Activated CD4-positive, alpha-beta memory T cell treated with anti-CD3 and anti-CD28 coated beads for 36 hours (primary cell): ENCODE measurements at regions of chr14 and their contacts with region 1.

Region 1: DNA sequence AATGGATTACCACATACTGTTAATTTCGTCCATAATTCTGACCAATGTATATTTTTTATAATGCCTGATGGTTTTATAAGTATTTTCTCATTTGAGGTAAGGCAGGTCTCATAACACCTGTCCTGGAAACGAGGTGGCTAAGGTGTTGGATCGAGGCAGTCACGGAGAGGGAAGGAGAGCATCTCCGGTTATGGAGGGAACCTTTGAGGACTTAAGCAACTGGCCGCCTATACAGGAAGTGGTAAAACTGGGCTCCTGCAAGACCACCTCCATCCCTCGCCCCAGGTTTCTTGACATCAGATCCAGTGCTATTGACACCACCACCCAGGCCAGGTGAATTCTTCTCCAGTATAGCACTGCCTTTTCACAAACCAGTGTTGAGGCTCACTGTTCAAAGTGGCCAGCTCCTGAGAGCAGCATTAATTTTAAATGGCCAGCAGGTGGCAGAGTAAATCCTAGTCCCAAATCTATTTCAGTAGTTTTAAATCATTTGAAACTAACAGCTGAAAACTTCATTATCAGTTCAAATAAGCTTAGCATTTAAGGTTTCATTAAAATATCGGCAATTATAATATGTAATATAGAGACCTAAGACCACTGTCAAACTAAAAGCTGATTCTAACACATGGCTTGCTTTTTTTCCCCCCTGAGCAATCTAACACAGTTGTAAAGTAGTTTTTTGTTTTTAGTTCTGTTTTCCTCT is 100.8 kb downstream of the PPM1A start:
- DNase-seq: peak; percentile 24
- H3K4me3 Mint-ChIP-seq: no peak overlapping the region
- H3K27ac Mint-ChIP-seq: no peak overlapping the region
- H3K4me1 Mint-ChIP-seq: no peaks in the 10 kb centered on the region
- H3K27me3 Mint-ChIP-seq: no peaks in the 10 kb centered on the region

Region 2: DNA sequence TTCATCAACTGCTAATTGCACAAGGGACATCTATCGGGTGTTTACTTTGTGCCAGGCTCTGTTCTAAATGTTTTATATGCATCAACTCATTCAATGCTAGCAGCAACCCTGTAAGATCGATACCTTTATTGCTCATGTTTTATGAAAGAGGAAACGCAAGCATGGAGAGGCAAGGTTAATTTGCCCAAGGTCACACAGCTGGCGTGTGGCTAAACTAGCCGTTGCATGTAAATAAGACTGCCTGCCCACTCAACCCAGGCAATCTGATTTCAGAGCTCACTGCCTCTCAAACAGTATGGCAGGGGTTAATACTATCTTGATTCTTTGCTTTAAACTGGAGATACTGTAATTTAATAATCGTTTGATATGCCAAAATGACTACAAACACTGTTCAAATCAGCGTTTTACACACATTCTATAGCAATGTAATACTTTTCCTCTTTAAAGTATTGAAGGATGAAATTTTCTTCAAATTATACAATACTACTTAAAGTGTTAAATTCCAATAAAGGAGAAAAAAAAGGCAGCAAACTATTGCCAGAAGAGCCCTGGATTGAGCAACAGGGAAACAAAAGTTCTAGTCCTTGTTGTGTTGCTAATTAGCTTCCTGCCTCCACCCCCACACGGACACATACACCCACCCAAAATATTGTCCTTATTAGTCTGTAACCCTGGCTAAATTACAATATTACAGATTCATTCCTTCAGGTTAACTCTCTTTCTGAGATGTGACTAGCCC is 145.5 kb before region 1 on chr14:
- CTCF ChIA-PET with region 1: no interaction called
- POLR2A ChIA-PET with region 1: no interaction called
- intact Hi-C with region 1: no loop called
- DNase-seq: no peak
- H3K4me3 Mint-ChIP-seq: no peak overlapping the region
- H3K27ac Mint-ChIP-seq: no peak overlapping the region
- H3K4me1 Mint-ChIP-seq: peaks cover 20% of the 10 kb centered on the region
- H3K27me3 Mint-ChIP-seq: peaks cover 23% of the 10 kb centered on the region

Region 3: GRCh38 chr14:60339571-60339970 is 10.2 kb before region 1 on chr14:
- CTCF ChIA-PET with region 1: interaction called, 17 read pairs
- POLR2A ChIA-PET with region 1: no interaction called
- intact Hi-C with region 1: no loop called
- DNase-seq: no peak
- H3K4me3 Mint-ChIP-seq: no peak overlapping the region
- H3K27ac Mint-ChIP-seq: no peak overlapping the region
- H3K4me1 Mint-ChIP-seq: no peaks in the 10 kb centered on the region
- H3K27me3 Mint-ChIP-seq: peaks cover 33% of the 10 kb centered on the region